MCF 10A (cell line): ENCODE measurements at regions of chr5 and their contacts with region 1.

Region 1: GRCh38 chr5:67010684-67011409 is 185.8 kb downstream of the CD180 start:
- DNase-seq: peak; percentile 90
- H3K4me3 Mint-ChIP-seq: peak overlapping the region; percentile 65
- H3K27ac Mint-ChIP-seq: peak overlapping the region; percentile 92
- H3K4me1 Mint-ChIP-seq: peaks cover 80% of the 10 kb centered on the region
- H3K27me3 Mint-ChIP-seq: no peaks in the 10 kb centered on the region
- CTCF ChIP-seq: no peak

Region 2: DNA sequence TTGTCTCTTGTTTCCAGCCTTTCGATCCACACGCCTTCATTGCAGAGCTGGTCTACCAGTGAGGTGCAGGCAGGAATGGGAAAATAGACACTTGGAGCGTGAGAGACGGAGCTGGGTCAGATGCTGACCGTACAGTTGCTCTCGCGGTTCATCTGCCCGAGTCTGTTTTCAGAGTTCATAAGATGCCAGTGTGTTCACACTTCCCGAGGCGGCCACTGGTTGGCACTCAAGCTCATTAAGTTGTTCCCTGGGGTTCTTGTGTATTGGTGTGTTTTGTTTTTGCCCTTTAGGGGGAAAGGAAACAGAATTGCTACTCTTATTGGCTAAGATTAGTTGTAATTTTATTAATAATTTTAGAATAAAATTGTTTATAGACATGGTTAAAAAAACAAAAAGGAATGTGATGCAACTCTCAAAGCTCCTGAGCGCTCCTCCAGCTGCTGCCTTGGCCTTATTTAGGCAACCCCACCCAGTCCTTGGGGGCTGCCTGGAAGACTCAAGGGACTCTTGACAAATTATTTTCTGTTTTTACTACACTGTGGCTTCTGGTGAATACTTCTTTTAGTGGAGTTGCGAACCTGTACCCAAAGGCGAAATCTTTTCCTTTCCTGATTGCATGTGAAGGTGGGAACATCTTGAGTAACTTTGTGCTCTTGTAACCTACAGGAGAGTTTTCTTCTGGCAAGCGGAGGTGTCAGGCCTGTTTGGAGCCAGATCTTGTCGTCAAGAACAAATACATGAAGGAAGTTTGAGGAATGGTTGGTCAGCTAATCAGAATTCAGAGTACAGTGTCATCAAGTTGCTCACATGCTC is 268.6 kb before region 1 on chr5:
- CTCF ChIA-PET with region 1: no interaction called
- POLR2A ChIA-PET with region 1: no interaction called
- intact Hi-C with region 1: no loop called
- DNase-seq: peak; percentile 26
- H3K4me3 Mint-ChIP-seq: no peak overlapping the region
- H3K27ac Mint-ChIP-seq: no peak overlapping the region
- H3K4me1 Mint-ChIP-seq: no peaks in the 10 kb centered on the region
- H3K27me3 Mint-ChIP-seq: peaks cover 33% of the 10 kb centered on the region
- CTCF ChIP-seq: no peak

Region 3: DNA sequence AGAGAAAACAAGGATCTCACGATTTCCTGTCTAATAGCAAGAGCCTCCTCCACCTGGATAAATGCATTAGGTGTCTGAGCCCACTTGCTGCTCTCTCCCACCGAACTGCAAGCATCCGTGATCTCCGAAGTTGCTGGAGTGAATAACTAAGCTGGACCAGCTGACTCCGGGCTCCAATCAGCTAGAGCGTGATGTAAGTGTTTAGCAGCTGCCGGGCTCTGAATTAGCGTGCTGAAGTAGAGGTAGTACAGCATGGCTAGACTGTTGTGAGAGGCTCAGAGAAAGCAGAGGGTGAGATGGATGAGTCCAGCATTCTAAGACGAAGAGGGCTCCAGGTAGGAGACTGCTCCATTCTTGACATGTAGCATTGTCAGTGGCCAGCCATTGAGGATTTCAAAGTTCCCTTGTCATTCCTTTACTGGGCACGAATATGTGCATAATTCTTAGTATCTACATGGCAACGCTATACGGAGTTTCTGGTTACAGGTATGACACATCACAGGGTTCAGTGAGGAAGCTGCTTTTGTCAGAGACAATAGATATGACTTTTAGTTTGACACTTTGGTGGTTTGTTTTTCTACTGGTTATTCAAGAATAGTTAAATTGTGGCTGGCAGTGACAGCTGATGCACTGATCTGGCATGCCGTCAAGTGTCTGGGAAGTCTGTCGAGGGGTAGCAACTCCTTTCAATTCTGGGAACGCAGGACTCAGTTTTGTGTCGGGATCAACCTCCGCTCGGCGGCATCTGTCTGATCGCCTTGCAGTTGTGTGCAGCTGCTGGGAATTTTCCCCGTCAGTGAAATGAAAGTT is 182.1 kb before region 1 on chr5:
- CTCF ChIA-PET with region 1: interaction called, 3 read pairs
- POLR2A ChIA-PET with region 1: interaction called, 27 read pairs
- intact Hi-C with region 1: no loop called
- DNase-seq: peak; percentile 67
- H3K4me3 Mint-ChIP-seq: peak overlapping the region; percentile 85
- H3K27ac Mint-ChIP-seq: peak overlapping the region; percentile 90
- H3K4me1 Mint-ChIP-seq: peaks cover 21% of the 10 kb centered on the region
- H3K27me3 Mint-ChIP-seq: no peaks in the 10 kb centered on the region
- CTCF ChIP-seq: no peak

Region 4: GRCh38 chr5:66958980-66959641 is 51.7 kb before region 1 on chr5:
- CTCF ChIA-PET with region 1: interaction called, 3 read pairs
- POLR2A ChIA-PET with region 1: interaction called, 31 read pairs
- intact Hi-C with region 1: no loop called
- DNase-seq: peak; percentile 60
- H3K4me3 Mint-ChIP-seq: peak overlapping the region; percentile 74
- H3K27ac Mint-ChIP-seq: peak overlapping the region; percentile 90
- H3K4me1 Mint-ChIP-seq: peaks cover 34% of the 10 kb centered on the region
- H3K27me3 Mint-ChIP-seq: no peaks in the 10 kb centered on the region
- CTCF ChIP-seq: no peak

Region 5: DNA sequence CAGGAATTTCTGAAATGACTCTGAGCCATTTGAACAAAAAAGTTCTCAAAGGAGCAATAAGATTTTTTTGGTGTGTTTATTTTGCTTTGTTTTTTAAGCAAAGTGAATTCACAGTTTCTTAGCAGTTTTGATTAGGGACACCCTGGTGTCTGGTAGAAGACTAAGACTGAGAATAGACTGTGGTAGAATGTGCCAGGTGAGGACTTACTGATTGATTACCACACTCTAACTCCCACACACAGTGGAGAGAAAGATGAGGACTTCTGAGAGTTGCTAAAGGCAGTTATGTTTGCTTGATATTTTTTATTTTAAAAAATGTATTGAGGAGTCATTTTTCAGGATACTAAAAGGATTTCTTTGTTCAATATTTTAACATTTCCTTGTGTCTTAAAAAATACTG is 10.7 kb after region 1 on chr5:
- CTCF ChIA-PET with region 1: interaction called, 9 read pairs
- POLR2A ChIA-PET with region 1: interaction called, 191 read pairs
- intact Hi-C with region 1: no loop called
- DNase-seq: peak; percentile 61
- H3K4me3 Mint-ChIP-seq: peak overlapping the region; percentile 12
- H3K27ac Mint-ChIP-seq: peak overlapping the region; percentile 40
- H3K4me1 Mint-ChIP-seq: peaks cover 25% of the 10 kb centered on the region
- H3K27me3 Mint-ChIP-seq: no peaks in the 10 kb centered on the region
- CTCF ChIP-seq: no peak

Region 6: GRCh38 chr5:67059744-67060490 is 49.1 kb after region 1 on chr5:
- CTCF ChIA-PET with region 1: no interaction called
- POLR2A ChIA-PET with region 1: interaction called, 23 read pairs
- intact Hi-C with region 1: loop called (anchors 5 kb)
- DNase-seq: peak; percentile 49
- H3K4me3 Mint-ChIP-seq: peak overlapping the region; percentile 15
- H3K27ac Mint-ChIP-seq: peak overlapping the region; percentile 83
- H3K4me1 Mint-ChIP-seq: peaks cover 39% of the 10 kb centered on the region
- H3K27me3 Mint-ChIP-seq: no peaks in the 10 kb centered on the region
- CTCF ChIP-seq: no peak

Region 7: GRCh38 chr5:67209142-67209771 is 198.4 kb after region 1 on chr5:
- CTCF ChIA-PET with region 1: no interaction called
- POLR2A ChIA-PET with region 1: interaction called, 4 read pairs
- intact Hi-C with region 1: loop called (anchors 5 kb)
- DNase-seq: peak; percentile 88
- H3K4me3 Mint-ChIP-seq: no peak overlapping the region
- H3K27ac Mint-ChIP-seq: no peak overlapping the region
- H3K4me1 Mint-ChIP-seq: peaks cover 48% of the 10 kb centered on the region
- H3K27me3 Mint-ChIP-seq: no peaks in the 10 kb centered on the region
- CTCF ChIP-seq: peak; percentile 69

Region 8: GRCh38 chr5:67255881-67256280 is 245.0 kb after region 1 on chr5:
- CTCF ChIA-PET with region 1: no interaction called
- POLR2A ChIA-PET with region 1: no interaction called
- intact Hi-C with region 1: no loop called
- DNase-seq: no peak
- H3K4me3 Mint-ChIP-seq: no peak overlapping the region
- H3K27ac Mint-ChIP-seq: peak overlapping the region; percentile 98
- H3K4me1 Mint-ChIP-seq: peaks cover 40% of the 10 kb centered on the region
- H3K27me3 Mint-ChIP-seq: no peaks in the 10 kb centered on the region
- CTCF ChIP-seq: no peak